Cardiac septum (tissue), 1 donor: ENCODE measurements at regions of chr5 and their contacts with region 1.

Region 1: DNA sequence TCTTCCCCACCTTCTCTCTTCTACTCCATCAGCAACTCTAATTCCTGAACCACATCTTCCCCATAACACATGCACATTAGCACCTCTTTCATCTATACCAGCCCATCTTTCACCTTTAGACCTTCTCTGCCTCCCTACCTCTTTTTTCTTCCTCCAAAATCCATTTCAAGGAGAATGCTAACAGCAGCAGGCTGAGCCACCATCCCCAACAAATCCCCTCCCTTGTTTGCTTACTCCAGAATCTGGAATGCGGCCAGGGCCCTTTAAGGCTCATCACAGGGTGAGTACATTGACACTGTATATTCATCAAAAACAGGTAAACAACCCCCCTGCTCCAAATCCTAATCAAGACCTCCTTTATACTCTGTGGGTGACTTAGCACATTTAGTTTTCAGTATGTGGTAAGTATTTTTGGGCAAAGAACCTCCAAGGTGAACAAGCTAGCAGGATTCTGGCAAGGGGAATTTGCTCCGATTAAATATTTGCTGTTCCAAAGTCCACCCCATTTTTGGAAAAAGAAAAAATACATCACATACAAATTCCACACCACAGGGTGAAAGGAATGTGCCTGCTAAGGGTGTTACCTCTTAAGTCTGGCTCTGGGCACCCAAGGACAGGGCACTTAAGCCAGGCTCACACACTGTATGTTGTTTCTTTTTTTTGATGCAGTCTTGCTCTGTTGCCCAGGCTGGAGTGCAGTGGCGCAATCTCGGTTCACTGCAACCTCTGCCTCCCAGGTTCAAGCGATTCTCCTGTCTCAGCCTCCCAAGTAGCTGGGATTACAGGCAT is 71.4 kb downstream of the SERINC5 start:
- DNase-seq: no peak

Region 2: DNA sequence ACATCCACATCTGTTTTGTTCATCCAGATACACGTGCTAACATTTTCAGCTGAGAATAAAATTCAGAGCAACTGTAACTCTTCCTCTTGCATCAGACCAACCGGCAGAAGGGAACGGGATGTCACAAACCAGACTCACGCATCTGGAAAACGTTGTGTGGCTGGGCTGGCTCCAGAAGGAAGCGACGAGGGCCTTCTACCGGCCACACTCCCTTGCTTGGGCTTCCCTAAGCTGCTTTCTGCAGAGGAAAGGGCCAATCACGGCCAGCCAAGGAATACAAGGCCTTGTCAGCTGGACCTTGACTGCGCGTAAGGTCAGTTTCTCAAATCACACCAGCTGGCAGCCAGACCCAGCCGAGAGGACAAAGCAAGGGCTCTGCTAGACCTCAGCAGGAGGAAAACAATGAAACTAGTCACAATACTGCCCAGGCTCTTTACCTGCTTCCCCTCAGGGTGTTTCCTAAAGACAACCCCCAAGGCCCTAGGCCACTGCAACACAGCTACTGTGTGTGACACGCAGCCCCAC is 43.2 kb before region 1 on chr5:
- intact Hi-C with region 1: loop called (anchors 5 kb)
- DNase-seq: peak; percentile 87

Region 3: GRCh38 chr5:80153586-80154126 is 30.8 kb before region 1 on chr5:
- intact Hi-C with region 1: no loop called
- DNase-seq: no peak